ENCODE measurements at regions of chr10 and their contacts with region 1.

Region 1: DNA sequence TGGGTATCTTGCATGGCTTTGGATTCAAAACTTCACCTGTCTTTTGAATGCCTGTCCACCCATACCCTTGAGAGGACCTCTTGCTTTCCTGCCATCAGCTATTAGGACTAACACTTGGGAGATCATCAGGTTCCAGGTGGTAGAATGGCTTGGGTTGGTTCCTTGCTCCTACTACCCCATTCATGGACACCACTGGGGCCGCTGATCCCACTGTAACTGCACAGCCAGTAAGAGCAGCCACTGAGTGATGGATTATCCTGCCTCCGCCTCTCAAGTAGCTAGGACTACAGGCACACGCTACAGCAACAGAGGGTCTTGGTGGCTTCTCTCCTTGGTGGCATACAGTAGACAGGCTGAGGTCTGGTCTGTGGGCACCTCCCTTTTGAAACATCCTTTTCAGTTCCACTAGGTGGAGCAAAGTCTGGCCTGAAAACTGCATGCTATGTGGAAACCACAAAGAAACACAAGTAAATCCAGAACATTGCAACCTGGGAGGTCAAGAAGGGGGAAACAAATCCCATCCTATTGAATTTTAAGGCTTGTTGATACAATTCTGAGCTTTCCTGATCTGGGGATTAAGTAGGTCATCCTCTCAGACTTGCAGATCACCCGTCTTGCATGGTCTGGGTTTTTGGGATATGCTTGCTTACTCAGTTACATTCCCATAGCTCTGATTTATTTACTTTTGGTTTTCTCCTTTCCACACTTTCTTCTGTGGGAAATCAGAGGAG is 9.4 kb downstream of the WBP1L start:
- DNase-seq: peak; percentile 87
- H3K4me3 ChIP-seq: no peak overlapping the region
- H3K27ac ChIP-seq: peak overlapping the region; percentile 24
- H3K4me1 ChIP-seq: peaks cover 7% of the 10 kb centered on the region
- H3K27me3 ChIP-seq: no peaks in the 10 kb centered on the region
- CTCF ChIP-seq: peak; percentile 65 to 70
- POLR2A ChIP-seq: no peak

Region 2: DNA sequence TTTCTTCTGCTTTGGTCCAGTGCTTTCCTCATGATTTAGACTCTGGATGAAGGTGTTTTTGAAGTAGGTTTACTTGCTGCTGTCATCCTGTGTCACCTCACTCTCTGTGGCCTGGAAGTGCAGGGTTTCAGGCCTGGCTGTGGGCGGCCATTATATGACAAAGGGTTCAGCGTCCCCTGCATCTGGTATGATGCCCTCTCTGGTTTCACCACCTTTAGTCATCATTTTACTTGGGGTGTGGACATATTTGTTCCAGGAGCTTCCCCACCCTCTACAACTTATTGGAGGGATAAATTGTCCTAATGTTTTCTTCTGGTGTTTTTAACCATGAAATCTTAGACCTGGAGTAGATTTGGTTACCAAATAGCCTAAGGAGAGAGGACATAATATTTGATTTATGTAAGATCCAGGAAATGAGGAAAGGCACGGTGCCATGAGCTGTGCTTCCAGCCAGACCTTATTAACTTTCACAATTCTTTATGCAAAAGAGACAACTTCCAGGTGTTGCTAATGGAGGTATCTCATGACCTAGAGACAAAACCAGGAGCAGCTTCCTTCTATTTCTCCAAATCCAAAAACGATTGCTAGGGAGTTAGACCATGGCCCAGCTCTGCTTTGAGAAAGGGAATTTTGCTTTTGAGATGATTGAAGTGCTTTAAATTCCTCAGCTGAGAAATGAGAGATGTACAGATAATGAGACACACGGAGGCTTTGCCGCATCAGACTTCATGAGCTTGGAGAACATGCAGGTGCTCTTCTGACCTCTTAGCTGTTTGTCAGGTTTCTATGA is 11.5 kb after region 1 on chr10:
- CTCF ChIA-PET with region 1: interaction called, 17 read pairs
- POLR2A ChIA-PET with region 1: no interaction called
- dilution Hi-C with region 1: no loop called
- intact Hi-C with region 1: no loop called
- DNase-seq: no peak
- H3K4me3 ChIP-seq: no peak overlapping the region
- H3K27ac ChIP-seq: no peak overlapping the region
- H3K4me1 ChIP-seq: peaks cover 9% of the 10 kb centered on the region
- H3K27me3 ChIP-seq: no peaks in the 10 kb centered on the region
- CTCF ChIP-seq: no peak
- POLR2A ChIP-seq: no peak

Region 3: DNA sequence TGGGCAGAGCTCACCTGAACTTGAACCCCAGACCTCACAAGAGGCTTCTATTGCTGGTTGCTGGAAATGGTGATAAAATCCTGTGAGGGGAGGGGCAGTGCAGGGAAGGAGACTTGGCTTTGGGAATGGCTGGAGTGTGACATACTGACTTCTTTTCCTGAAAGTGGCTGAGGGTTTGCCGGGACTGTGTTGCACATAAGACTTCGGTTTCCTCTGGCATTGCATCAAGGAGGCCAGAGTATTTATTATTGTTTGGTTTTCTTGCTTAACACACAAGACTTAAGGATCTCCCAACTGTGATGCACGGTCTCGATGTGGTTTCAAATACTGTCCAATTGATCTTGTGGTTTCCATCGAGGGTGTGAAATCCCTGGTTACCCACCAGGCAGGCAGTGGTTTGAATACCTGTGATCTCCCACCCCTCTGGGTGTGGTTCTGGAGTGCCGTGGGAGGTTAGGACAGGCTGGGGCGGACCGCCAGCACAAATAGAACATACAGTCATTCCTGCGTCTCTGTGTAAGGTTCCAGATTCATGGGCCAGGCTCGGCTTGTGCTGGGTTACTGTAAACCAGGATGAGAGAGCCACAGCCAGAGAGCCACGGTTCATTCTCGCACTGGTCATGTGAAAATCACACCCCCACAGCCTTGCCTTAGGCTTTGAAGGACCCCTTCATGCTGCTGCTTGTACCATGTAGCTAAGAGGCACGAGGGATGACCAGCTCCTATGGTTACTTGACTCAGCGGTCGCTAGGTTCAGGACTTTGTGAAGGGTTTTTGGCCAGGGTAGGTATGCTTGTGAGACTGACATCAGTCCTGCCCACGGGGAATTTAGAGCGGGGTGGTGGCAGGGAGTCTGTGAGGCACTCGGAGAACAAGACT is 29.8 kb after region 1 on chr10:
- CTCF ChIA-PET with region 1: interaction called, 44 read pairs
- POLR2A ChIA-PET with region 1: no interaction called
- dilution Hi-C with region 1: no loop called
- intact Hi-C with region 1: loop called (anchors 1 kb)
- DNase-seq: peak; percentile 97
- H3K4me3 ChIP-seq: peak overlapping the region in 1 of 3 experiments; percentile 24
- H3K27ac ChIP-seq: peak overlapping the region; percentile 77
- H3K4me1 ChIP-seq: peaks cover 49% of the 10 kb centered on the region
- H3K27me3 ChIP-seq: no peaks in the 10 kb centered on the region
- CTCF ChIP-seq: no peak
- POLR2A ChIP-seq: no peak

Region 4: GRCh38 chr10:102815790-102816549 is 62.9 kb after region 1 on chr10:
- CTCF ChIA-PET with region 1: interaction called, 13 read pairs
- POLR2A ChIA-PET with region 1: no interaction called
- dilution Hi-C with region 1: no loop called
- intact Hi-C with region 1: loop called (anchors 1 kb)
- DNase-seq: peak; percentile 92
- H3K4me3 ChIP-seq: no peak overlapping the region
- H3K27ac ChIP-seq: peak overlapping the region; percentile 99
- H3K4me1 ChIP-seq: peaks cover 42% of the 10 kb centered on the region
- H3K27me3 ChIP-seq: no peaks in the 10 kb centered on the region
- CTCF ChIP-seq: no peak
- POLR2A ChIP-seq: no peak

Region 5: DNA sequence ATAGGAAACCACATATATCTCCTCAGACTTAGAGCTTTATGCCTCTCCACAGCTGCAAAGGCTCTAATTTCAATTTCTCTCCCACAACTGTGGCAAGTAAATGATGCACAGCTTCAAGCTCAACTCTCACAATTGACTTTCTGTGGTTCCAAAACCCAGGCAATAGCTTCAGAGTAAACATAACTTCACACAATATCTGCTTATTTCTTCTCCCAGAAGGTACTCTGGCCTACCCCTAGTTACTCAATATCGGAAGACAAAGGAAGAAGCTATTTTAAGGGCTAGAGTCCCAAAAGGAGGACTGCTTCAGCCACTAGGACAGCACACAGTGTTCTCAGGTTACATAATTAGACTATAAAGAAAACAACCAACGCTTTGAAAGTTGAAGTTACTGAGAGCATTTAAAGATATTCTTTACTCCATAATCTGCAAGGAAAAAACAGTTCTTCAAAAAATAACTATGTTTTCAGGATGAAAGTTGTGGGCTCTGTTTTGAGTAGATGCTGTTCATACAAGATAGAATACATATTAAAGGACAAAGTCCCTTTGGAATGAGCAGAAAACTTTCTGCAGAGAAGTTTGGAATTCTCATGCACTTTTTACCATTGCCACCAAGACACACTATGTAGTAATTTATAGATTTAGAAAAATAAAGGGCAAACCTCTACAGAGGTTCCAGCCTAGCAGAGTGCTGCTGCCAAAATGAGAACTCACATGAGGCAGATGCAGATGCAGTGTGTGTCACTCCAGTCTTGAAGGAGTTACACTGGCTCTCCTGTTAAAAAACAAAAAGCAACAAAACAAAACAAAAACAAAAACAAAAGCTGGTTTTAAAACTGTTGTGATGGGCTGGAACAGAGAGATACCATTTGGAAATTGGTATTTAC is 358.2 kb after region 1 on chr10:
- CTCF ChIA-PET with region 1: no interaction called
- POLR2A ChIA-PET with region 1: no interaction called
- dilution Hi-C with region 1: no loop called
- intact Hi-C with region 1: no loop called
- DNase-seq: no peak
- H3K4me3 ChIP-seq: no peak overlapping the region
- H3K27ac ChIP-seq: no peak overlapping the region
- H3K4me1 ChIP-seq: no peaks in the 10 kb centered on the region
- H3K27me3 ChIP-seq: no peaks in the 10 kb centered on the region
- CTCF ChIP-seq: no peak
- POLR2A ChIP-seq: no peak